ENCODE measurements at regions of chr4 and their contacts with region 1.

Region 1: DNA sequence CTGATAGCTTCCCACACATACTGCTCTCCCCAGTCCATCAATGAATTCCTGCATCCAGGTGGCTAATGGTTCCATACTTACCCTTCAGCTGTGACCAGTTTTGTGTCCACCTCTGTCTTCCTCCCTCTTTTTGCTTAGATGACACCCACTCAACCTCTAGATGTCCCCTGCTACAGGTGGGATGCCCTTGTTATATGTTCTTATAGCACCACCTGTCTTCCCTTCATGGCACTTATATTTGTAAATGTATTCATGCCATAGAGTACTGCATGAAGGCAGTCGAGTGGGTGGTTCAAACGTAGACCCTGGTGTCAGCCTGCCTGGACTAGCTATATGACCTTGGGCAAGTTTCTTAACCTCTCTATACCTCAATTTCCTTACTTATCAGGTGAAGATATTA is 6.5 kb upstream of the USP46 start:
- DNase-seq: peak; percentile 51
- CTCF ChIP-seq: peak; percentile 50

Region 2: GRCh38 chr4:52376132-52376704 is 289.4 kb before region 1 on chr4:
- CTCF ChIA-PET with region 1: interaction called, 10 read pairs
- POLR2A ChIA-PET with region 1: no interaction called
- DNase-seq: peak; percentile 24
- CTCF ChIP-seq: peak; percentile 37

Region 3: GRCh38 chr4:52529983-52530382 is 135.6 kb before region 1 on chr4:
- CTCF ChIA-PET with region 1: no interaction called
- POLR2A ChIA-PET with region 1: no interaction called
- DNase-seq: no peak
- CTCF ChIP-seq: no peak

Region 4: GRCh38 chr4:52676536-52676935 is 10.9 kb after region 1 on chr4:
- CTCF ChIA-PET with region 1: interaction called, 10 read pairs
- POLR2A ChIA-PET with region 1: no interaction called
- DNase-seq: no peak
- CTCF ChIP-seq: no peak